Ascending aorta (tissue), 2 donors: ENCODE measurements at regions of chr10 and their contacts with region 1.

Region 1: GRCh38 chr10:71999360-72000072 is 35.3 kb downstream of the CHST3 start:
- DNase-seq: peak in 1 of 2 donors; percentile 80
- H3K4me3 ChIP-seq: peak overlapping the region in 1 of 2 donors; percentile 41
- H3K27ac ChIP-seq: peak overlapping the region; percentile 75 to 77
- H3K4me1 ChIP-seq: peaks cover 22 to 59% of the 10 kb centered on the region in 2 donors
- H3K27me3 ChIP-seq: no peaks in the 10 kb centered on the region
- CTCF ChIP-seq: no peak

Region 2: GRCh38 chr10:71985542-71986250 is 13.8 kb before region 1 on chr10:
- intact Hi-C with region 1: loop called (anchors 2 kb)
- DNase-seq: peak in 1 of 2 donors; percentile 91
- H3K4me3 ChIP-seq: peak overlapping the region in 1 of 2 donors; percentile 7
- H3K27ac ChIP-seq: peak overlapping the region; percentile 90 to 93
- H3K4me1 ChIP-seq: peaks cover 30 to 71% of the 10 kb centered on the region in 2 donors
- H3K27me3 ChIP-seq: no peaks in the 10 kb centered on the region
- CTCF ChIP-seq: peak in 2 of 3 experiments; percentile 20 to 29

Region 3: DNA sequence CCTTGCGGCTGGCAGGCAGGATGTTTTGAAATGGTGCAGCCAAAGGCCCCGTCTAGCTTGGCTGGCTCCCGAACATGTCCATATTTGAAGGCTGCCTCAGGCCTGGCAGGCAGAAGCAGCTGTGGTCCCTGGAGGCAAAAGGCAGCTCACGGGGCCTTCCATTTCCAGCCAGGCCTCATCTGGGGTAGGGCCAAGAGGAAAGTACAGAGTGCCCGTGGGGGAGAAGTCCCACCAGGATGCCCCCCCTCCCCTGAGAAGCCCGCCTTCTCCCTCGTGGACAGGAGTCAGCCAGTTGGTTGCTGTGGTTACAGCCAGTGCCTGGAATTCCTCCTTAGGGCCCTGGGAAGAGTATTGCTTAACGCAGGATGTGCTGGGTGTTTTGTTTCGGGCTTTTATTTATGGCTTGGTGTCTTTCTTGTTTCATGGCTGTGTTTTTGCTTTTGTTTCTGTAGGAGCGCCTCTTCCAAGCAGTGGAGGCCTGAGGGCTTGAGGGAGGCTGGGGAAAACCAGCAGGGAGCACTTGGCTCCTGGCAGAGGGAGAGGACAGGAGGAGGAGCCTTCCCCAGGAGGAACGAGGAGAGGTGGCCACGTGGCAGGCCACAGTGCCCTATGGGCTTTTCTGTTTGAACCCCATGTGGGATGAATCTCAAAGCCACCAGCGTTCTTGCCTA is 10.0 kb after region 1 on chr10:
- intact Hi-C with region 1: loop called (anchors 1 kb)
- DNase-seq: peak; percentile 93 to 99
- H3K4me3 ChIP-seq: peak overlapping the region in 1 of 2 donors; percentile 16
- H3K27ac ChIP-seq: peak overlapping the region; percentile 93 to 94
- H3K4me1 ChIP-seq: peaks cover 21 to 27% of the 10 kb centered on the region in 2 donors
- H3K27me3 ChIP-seq: no peaks in the 10 kb centered on the region
- CTCF ChIP-seq: no peak